Posterior vena cava (tissue), 2 donors: ENCODE measurements at regions of chr1 and their contacts with region 1.

Region 1: DNA sequence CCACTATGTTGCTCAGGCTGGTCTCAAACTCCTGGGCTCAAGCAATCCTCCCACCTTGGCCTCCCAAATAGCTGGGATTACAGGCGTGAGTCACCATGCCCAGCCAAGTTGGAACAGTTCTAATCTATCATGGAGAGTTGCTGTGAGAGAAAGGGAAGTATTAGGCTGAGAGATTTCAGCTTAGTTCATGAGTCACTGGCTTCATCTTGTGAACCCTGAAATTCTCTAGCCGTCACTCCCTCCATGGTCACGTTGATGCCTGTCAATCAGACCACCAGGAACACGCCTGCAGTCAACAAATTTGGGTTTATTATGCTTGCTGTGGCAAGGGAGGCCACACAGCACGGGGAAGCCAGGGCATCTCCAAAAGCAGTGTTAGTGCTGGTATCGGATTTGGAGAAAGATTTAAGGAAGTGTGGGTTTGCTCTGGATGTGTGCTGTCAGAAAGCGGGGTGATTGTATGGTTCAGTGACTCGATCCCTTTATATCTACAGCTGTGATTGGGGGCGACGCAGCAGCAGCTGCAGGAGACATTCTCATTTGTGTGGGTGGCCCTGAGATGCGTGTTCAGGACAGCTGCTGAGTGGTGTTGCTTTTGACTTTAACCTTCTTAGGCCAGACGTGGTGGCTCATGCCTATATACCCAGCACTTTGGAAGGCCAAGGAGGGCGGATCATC is 18.7 kb downstream of the UQCRHL start:
- DNase-seq: no peak

Region 2: DNA sequence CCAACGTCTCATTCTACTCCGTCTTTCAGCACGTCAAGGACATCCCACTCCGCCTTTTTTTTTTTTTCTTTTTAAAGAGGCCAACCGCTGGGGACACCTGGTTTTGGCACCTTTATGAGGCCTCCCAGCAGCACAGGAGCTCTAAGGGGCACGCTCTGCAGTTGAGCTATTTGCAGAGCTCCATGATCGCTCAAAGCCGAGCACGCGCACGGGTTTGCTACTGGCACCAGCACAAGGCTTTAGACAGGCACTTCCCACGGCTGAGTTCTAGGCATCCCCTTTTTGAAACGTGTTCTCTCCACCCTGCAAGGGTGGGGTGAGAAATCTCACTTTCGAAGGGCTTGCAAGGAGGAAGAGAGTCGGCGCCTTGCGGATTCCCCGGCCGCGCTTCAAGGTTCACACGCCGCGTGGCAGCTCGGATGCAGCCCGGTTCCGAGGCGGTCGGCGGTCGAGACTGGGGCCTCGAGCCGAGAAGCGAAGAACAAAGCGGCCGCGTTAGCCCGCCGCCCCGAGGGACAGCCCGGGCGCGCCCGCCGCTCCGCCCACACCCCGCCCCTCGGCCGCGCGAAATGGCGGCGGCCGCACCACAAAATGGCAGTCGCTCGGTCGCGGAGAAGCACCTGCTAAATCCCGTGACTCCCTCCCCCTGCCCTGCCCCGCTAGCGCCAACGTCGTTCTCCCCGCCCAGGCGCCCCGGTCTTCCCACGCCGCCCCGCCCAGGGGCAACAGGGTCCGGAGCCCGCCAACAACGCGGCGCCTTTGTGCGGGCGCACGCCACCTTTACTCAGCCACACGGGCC is 45.8 kb after region 1 on chr1:
- intact Hi-C with region 1: no loop called
- DNase-seq: peak; percentile 94

Region 3: DNA sequence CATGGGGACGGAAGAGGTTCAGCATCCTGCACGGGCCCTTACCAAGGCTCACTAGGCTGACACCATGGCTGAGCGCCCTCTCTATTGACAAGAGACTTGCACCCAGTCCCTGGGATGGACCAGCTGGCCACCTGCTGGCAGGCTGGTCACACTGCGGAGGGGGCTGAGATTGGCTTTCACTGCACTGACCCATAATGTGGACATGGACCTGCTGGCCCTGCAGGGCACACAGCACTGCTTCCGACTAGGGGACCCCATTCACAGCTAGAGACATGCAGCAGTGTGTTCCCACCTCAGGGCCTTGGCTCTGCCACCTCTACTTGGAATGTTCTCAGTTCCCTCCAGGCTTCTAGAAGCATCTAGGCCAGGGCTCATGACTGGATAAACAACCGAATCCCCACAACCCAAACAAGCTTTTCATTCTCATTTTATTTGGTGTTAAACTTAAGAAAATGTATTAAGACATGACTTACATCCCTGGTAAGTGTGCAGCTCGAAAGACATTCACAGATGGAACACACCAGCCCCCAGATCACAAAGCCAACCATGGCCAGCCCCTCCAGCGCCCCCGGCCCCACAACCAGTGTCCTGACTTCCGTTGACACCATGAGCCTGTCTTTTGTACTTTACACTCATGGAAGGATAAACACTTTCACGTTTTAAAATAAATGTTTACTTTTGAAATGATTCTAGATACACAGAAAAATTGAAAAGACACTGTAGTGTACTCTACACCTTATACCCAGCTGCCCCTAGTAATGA is 206.0 kb after region 1 on chr1:
- intact Hi-C with region 1: loop called (anchors 2 to 5 kb)
- DNase-seq: peak; percentile 92

Region 4: DNA sequence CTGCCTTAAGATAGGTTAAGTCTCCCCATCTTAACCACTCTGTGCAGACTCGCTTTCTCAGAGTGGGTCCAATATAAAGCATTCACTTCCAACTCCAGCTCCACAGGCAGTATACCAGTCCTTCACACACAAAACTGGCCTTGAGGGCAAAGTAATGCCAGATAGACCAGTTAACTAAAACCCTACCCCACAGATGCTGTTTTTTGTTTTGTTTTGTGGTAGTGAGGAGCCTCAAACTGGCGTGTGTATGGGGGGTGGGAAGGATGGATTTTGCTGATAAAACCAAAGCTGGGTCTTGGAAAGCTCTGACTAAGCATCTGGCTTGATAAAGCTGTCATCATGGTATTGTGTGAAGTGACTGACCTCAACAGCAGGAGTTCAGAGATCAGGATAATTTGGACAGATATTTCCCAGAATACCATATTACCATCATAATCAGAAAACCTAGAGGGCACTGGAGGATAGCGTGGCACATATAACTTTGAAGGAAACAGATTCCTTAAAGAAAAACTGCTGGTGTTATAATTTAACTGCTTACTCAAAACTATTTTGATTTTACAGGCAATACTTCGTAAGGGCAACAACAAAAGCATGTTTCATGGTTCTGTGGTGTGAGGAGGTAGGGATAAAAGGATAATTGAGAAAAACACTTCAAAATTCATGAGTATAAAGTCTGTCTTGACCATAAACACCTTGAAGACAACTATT is 477.8 kb after region 1 on chr1:
- intact Hi-C with region 1: no loop called
- DNase-seq: no peak